ENCODE measurements at regions of chr11 and their contacts with region 1.

Region 1: GRCh38 chr11:130916238-130916855 is at the start of gene SNX19:
- DNase-seq: peak; percentile 85 to 92 (median 87)
- H3K4me3 ChIP-seq: peak within 1 kb of the TSS; percentile 71
- H3K4me3 Mint-ChIP-seq: peak within 1 kb of the TSS; percentile 84 to 90 (median 89)
- H3K27ac ChIP-seq: peak within 1 kb of the TSS; percentile 86
- H3K27ac Mint-ChIP-seq: peak within 1 kb of the TSS; percentile 69 to 97 (median 94)
- H3K4me1 ChIP-seq: peaks cover 31% of the 10 kb centered on the region
- H3K4me1 Mint-ChIP-seq: peaks cover 17 to 51% (median 44%) of the 10 kb centered on the region in 3 donors
- H3K27me3 ChIP-seq: no peaks in the 10 kb centered on the region
- H3K27me3 Mint-ChIP-seq: peaks cover 9 to 30% of the 10 kb centered on the region in 2 donors
- total RNA-seq, gene SNX19: 41.2 to 44.4 TPM

Region 2: GRCh38 chr11:130434521-130435223 is 481.7 kb before region 1 on chr11:
- CTCF ChIA-PET with region 1: interaction called, 13 read pairs
- POLR2A ChIA-PET with region 1: no interaction called
- DNase-seq: peak; percentile 43 to 68 (median 58)
- H3K4me3 ChIP-seq: peak overlapping the region; percentile 77
- H3K4me3 Mint-ChIP-seq: no peak overlapping the region
- H3K27ac ChIP-seq: no peak overlapping the region
- H3K27ac Mint-ChIP-seq: no peak overlapping the region
- H3K4me1 ChIP-seq: peaks cover 9% of the 10 kb centered on the region
- H3K4me1 Mint-ChIP-seq: peaks cover 15 to 19% (median 15%) of the 10 kb centered on the region in 3 donors
- H3K27me3 ChIP-seq: peaks cover 8% of the 10 kb centered on the region
- H3K27me3 Mint-ChIP-seq: peaks cover 13 to 20% of the 10 kb centered on the region in 2 donors

Region 3: DNA sequence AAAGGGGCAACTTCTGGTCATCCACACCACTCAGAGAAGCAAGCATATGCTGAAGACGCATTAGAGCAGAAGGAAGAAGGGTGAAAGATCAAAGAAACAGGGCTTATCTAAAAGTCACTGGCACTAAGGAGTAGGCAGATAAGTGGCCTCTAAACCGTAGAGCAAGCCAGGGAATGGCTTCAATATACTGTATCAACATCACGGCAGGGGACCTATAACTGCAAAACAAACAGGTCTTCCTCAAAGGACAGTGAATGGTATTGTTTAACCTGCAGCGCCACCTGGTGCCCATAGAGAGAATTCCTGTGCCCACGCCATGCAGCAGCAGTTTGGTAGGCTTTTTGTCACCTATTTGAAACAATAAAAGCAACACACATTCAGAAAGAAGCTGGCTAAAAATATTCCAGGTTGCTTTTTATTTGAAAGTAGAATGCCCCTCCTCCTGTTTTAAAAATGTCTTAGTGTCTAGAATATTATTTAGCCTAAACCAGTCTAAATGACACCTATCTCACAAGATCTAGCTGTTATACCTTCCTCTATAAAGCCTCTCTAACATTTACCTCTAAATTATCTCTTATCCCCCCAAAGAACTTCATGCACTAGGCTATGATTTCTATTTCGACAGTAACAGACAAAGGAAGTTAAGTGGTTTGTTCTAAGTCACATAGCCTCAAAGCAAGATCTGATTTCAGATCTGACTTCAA is 21.9 kb before region 1 on chr11:
- CTCF ChIA-PET with region 1: interaction called, 26 read pairs
- POLR2A ChIA-PET with region 1: no interaction called
- DNase-seq: peak; percentile 34 to 73 (median 52)
- H3K4me3 ChIP-seq: no peak overlapping the region
- H3K4me3 Mint-ChIP-seq: no peak overlapping the region
- H3K27ac ChIP-seq: no peak overlapping the region
- H3K27ac Mint-ChIP-seq: peak overlapping the region in 3 of 8 donors; percentile 26 to 49 (median 31)
- H3K4me1 ChIP-seq: no peaks in the 10 kb centered on the region
- H3K4me1 Mint-ChIP-seq: peaks cover 0 to 9% (median 8%) of the 10 kb centered on the region in 3 donors
- H3K27me3 ChIP-seq: no peaks in the 10 kb centered on the region
- H3K27me3 Mint-ChIP-seq: no peaks in the 10 kb centered on the region

Region 4: GRCh38 chr11:130904380-130904779 is 12.0 kb before region 1 on chr11:
- CTCF ChIA-PET with region 1: interaction called, 44 read pairs
- POLR2A ChIA-PET with region 1: no interaction called
- DNase-seq: no peak
- H3K4me3 ChIP-seq: no peak overlapping the region
- H3K4me3 Mint-ChIP-seq: no peak overlapping the region
- H3K27ac ChIP-seq: no peak overlapping the region
- H3K27ac Mint-ChIP-seq: no peak overlapping the region
- H3K4me1 ChIP-seq: no peaks in the 10 kb centered on the region
- H3K4me1 Mint-ChIP-seq: peaks cover 16 to 29% (median 25%) of the 10 kb centered on the region in 3 donors
- H3K27me3 ChIP-seq: no peaks in the 10 kb centered on the region
- H3K27me3 Mint-ChIP-seq: no peaks in the 10 kb centered on the region

Region 5: DNA sequence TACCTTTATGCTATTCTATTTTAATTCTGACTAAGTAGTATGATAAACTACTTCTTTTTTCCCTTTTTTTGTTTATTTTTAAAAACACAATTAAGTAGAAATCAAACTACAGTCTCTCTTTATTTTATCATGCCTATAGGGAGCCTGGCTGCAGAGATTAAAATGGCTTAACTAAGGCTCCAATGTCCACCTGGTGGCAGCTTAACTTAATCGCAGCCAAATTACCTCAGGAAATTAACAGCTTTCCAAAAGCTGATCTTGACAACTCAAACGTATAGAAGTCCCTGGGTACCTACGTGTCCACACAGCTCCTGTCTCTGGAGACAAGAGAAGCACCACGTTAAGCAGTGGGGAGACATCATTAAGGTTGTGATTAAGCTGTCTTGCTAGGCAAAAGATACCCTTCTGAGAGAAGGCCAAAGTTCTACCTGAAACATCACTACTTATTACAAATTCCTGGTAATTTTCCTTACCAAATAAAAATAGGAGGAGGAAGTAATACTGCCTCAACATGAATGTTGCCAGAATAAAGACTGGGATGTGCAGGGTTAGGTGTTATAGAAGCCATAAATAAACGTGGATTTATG is 63.1 kb after region 1 on chr11:
- CTCF ChIA-PET with region 1: no interaction called
- POLR2A ChIA-PET with region 1: no interaction called
- DNase-seq: no peak
- H3K4me3 ChIP-seq: no peak overlapping the region
- H3K4me3 Mint-ChIP-seq: no peak overlapping the region
- H3K27ac ChIP-seq: no peak overlapping the region
- H3K27ac Mint-ChIP-seq: no peak overlapping the region
- H3K4me1 ChIP-seq: no peaks in the 10 kb centered on the region
- H3K4me1 Mint-ChIP-seq: no peaks in the 10 kb centered on the region
- H3K27me3 ChIP-seq: no peaks in the 10 kb centered on the region
- H3K27me3 Mint-ChIP-seq: peaks cover 15 to 39% of the 10 kb centered on the region in 2 donors